ENCODE measurements at regions of chr6 and their contacts with region 1.

Region 1: GRCh38 chr6:87589693-87590549 is at the starts of genes ORC3 and RARS2:
- DNase-seq: peak; percentile 88 to 96 (median 92)
- ATAC-seq: peak; percentile 98
- H3K4me3 ChIP-seq: peak within 1 kb of the TSS; percentile 68
- H3K4me3 Mint-ChIP-seq: peak within 1 kb of the TSS; percentile 89
- H3K27ac ChIP-seq: peak within 1 kb of the TSS; percentile 76 to 80
- H3K27ac Mint-ChIP-seq: peak within 1 kb of the TSS; percentile 87
- H3K4me1 ChIP-seq: peaks cover 37% of the 10 kb centered on the region
- H3K4me1 Mint-ChIP-seq: peaks cover 74% of the 10 kb centered on the region
- H3K27me3 ChIP-seq: no peaks in the 10 kb centered on the region
- H3K27me3 Mint-ChIP-seq: no peaks in the 10 kb centered on the region
- CTCF ChIP-seq: no peak
- total RNA-seq, gene ORC3: 12.1 to 12.9 TPM
- total RNA-seq, gene RARS2: 21.9 to 22.4 TPM

Region 2: GRCh38 chr6:87322304-87323212 is 267.4 kb before region 1 on chr6 and contains the start of gene SMIM8:
- CTCF ChIA-PET with region 1: interaction called, 3 read pairs
- POLR2A ChIA-PET with region 1: no interaction called
- intact Hi-C with region 1: loop called in 1 of 2 experiments (anchors 2 kb)
- DNase-seq: peak; percentile 75 to 89 (median 82)
- ATAC-seq: peak; percentile 98
- H3K4me3 ChIP-seq: peak within 1 kb of the TSS; percentile 73
- H3K4me3 Mint-ChIP-seq: peak within 1 kb of the TSS; percentile 92
- H3K27ac ChIP-seq: peak within 1 kb of the TSS; percentile 14 to 52
- H3K27ac Mint-ChIP-seq: peak within 1 kb of the TSS; percentile 67
- H3K4me1 ChIP-seq: peaks cover 9% of the 10 kb centered on the region
- H3K4me1 Mint-ChIP-seq: peaks cover 21% of the 10 kb centered on the region
- H3K27me3 ChIP-seq: no peaks in the 10 kb centered on the region
- H3K27me3 Mint-ChIP-seq: no peaks in the 10 kb centered on the region
- CTCF ChIP-seq: peak; percentile 97
- total RNA-seq, gene SMIM8: 5.4 TPM

Measured in CD4-positive, alpha-beta T cell (primary cell).